ENCODE measurements at regions of chr6 and their contacts with region 1.

Region 1: DNA sequence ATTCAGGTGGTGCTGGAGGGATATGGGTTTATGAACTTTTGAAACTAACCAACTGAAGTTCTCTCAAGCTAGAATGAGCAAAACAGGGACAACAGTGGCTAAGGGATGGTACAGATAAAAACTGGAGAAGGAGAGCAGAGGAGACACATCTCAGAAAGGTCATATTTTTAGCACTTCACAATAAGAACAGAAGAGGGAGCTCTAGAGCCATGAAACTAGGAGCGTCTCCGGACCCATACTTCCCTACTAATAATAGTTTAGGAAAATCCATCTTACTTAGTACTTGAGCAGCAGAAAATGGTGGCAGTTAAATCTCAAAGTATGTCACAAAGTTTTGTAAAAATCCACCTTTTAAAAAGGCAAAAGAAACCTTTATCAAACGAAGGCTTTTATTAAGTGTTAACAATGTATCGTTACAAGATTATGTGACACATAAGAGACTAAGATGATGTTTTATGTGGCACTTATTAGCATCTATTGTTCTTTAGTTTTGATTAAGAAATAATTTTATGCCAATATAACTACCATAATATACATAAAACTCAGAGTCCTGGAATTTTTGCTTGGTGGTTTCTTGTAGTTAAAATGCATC is 278.6 kb downstream of the TBC1D32 start:
- ATAC-seq: peak in 4 of 8 experiments; percentile 47 to 91 (median 84)
- H3K4me3 ChIP-seq: no peak overlapping the region
- H3K27ac ChIP-seq: no peak overlapping the region
- H3K4me1 ChIP-seq: no peaks in the 10 kb centered on the region

Region 2: GRCh38 chr6:121161879-121162278 is 106.2 kb after region 1 on chr6:
- in situ Hi-C with region 1: no loop called
- ATAC-seq: no peak
- H3K4me3 ChIP-seq: no peak overlapping the region
- H3K27ac ChIP-seq: no peak overlapping the region
- H3K4me1 ChIP-seq: no peaks in the 10 kb centered on the region

Region 3: GRCh38 chr6:121222656-121223055 is 167.0 kb after region 1 on chr6:
- in situ Hi-C with region 1: loop called in 1 of 9 experiments (anchors 25 kb)
- ATAC-seq: peak in 4 of 8 experiments; percentile 24 to 95 (median 52)
- H3K4me3 ChIP-seq: no peak overlapping the region
- H3K27ac ChIP-seq: no peak overlapping the region
- H3K4me1 ChIP-seq: no peaks in the 10 kb centered on the region

Region 4: GRCh38 chr6:121305957-121306607 is 250.4 kb after region 1 on chr6:
- in situ Hi-C with region 1: loop called in 1 of 9 experiments (anchors 25 kb)
- ATAC-seq: peak; percentile 29 to 69 (median 46)
- H3K4me3 ChIP-seq: no peak overlapping the region
- H3K27ac ChIP-seq: no peak overlapping the region
- H3K4me1 ChIP-seq: no peaks in the 10 kb centered on the region

Measured in motor neuron (in vitro differentiated cells).